Panc1 (cell line): ENCODE measurements at regions of chr19 and their contacts with region 1.

Region 1: DNA sequence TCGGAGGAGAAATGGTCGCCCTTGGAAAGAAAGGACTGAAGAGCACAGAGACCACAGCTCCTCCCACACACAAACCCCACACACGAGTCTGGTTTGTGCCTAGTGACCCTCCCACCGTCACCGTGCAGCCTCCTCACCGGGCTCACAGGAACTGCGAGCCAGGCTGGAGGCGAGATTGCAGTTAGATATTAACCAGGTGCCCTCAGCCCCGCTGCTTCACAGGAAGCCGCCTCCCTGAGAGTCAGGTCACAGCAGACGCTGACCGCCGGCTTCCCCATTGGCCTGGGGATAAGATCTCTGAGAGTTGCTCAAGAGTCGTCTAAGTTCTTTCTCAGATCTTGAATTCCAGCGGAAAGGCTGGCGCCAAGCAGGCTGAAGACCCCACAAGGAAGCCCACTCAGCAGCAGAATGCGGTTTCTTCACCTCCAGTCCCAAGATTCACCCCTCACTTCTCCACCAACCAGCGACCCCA is 870 bp downstream of the ZNF44 start:
- DNase-seq: no peak
- ATAC-seq: peak; percentile 52
- H3K4me3 ChIP-seq: peak overlapping the region; percentile 83 to 85
- H3K27ac ChIP-seq: peak overlapping the region; percentile 78
- H3K4me1 ChIP-seq: no peaks in the 10 kb centered on the region
- H3K27me3 ChIP-seq: no peaks in the 10 kb centered on the region
- CTCF ChIP-seq: no peak

Region 2: GRCh38 chr19:12194827-12195731 is 98.7 kb before region 1 on chr19:
- CTCF ChIA-PET with region 1: no interaction called
- POLR2A ChIA-PET with region 1: interaction called, 10 read pairs
- in situ Hi-C with region 1: no loop called
- intact Hi-C with region 1: no loop called
- DNase-seq: no peak
- ATAC-seq: no peak
- H3K4me3 ChIP-seq: no peak overlapping the region; a peak in 1 of 4 replicates
- H3K27ac ChIP-seq: no peak overlapping the region
- H3K4me1 ChIP-seq: no peaks in the 10 kb centered on the region
- H3K27me3 ChIP-seq: no peaks in the 10 kb centered on the region
- CTCF ChIP-seq: no peak